Gastrocnemius medialis (tissue), 4 donors: ENCODE measurements at regions of chr16 and their contacts with region 1.

Region 1: GRCh38 chr16:14399378-14400284 is 230.4 kb downstream of the PARN start:
- DNase-seq: peak; percentile 83 to 89
- ATAC-seq: peak; percentile 87 to 88
- H3K4me3 ChIP-seq: peak overlapping the region; percentile 17 to 32 (median 22)
- H3K27ac ChIP-seq: peak overlapping the region; percentile 91 to 96 (median 94)
- H3K4me1 ChIP-seq: peaks cover 21 to 25% of the 10 kb centered on the region in 2 donors
- H3K27me3 ChIP-seq: no peaks in the 10 kb centered on the region
- CTCF ChIP-seq: no peak
- POLR2A ChIP-seq: no peak

Region 2: GRCh38 chr16:14309001-14309886 is 90.4 kb before region 1 on chr16:
- in situ Hi-C with region 1: loop called in 1 of 4 experiments (anchors 25 kb)
- intact Hi-C with region 1: loop called (anchors 2 kb)
- DNase-seq: peak in 1 of 2 donors; percentile 61
- ATAC-seq: peak in 1 of 2 donors; percentile 22
- H3K4me3 ChIP-seq: peak overlapping the region; percentile 24 to 98 (median 64)
- H3K27ac ChIP-seq: peak overlapping the region; percentile 95 to 99 (median 98)
- H3K4me1 ChIP-seq: peaks cover 72 to 74% of the 10 kb centered on the region in 2 donors
- H3K27me3 ChIP-seq: no peaks in the 10 kb centered on the region
- CTCF ChIP-seq: peak in 2 of 5 experiments; percentile 6 to 33
- POLR2A ChIP-seq: no peak

Region 3: GRCh38 chr16:14331020-14331419 is 68.6 kb before region 1 on chr16:
- in situ Hi-C with region 1: no loop called
- intact Hi-C with region 1: no loop called
- DNase-seq: no peak
- ATAC-seq: no peak
- H3K4me3 ChIP-seq: no peak overlapping the region
- H3K27ac ChIP-seq: no peak overlapping the region
- H3K4me1 ChIP-seq: peaks cover 5 to 8% of the 10 kb centered on the region in 2 donors
- H3K27me3 ChIP-seq: no peaks in the 10 kb centered on the region
- CTCF ChIP-seq: no peak
- POLR2A ChIP-seq: no peak